Pancreas (tissue), 10 donors: ENCODE measurements at regions of chr11 and their contacts with region 1.

Region 1: DNA sequence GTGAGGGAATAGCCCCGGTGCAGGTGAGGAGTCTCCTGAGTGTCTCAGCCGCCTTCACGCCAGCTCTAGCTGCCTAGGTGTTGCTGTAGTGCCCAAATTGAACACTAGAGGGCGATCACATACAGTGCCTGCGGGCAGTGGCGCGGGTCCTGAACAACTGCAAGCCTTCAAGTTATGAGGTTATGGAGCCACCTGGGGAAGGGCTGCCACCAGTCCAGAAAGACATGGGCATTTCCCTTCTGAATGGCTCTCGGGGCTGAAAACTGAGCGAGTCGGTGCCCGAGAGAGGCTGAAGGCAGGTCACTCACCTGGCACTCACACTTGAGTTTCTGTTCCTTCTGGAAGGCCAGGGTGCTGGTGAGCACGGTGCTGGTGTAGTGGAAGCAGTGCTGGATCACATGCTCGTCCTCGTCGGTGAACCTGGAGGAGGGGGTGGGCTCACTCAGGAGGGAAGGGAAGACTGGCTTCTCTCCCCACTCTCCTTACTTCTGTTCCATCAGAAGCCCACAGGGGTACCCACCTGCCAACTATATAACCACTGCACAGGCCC is 88.4 kb downstream of the PDE2A start:
- DNase-seq: peak; percentile 45 to 78 (median 57)
- ATAC-seq: peak; percentile 68 to 87 (median 83)
- H3K4me3 ChIP-seq: no peak overlapping the region
- H3K27ac ChIP-seq: no peak overlapping the region
- H3K4me1 ChIP-seq: peaks cover 0 to 5% (median 0%) of the 10 kb centered on the region in 3 donors
- H3K27me3 ChIP-seq: no peaks in the 10 kb centered on the region
- CTCF ChIP-seq: peak; percentile 84 to 95 (median 94)

Region 2: GRCh38 chr11:72328366-72329224 is 257.2 kb before region 1 on chr11:
- intact Hi-C with region 1: no loop called
- DNase-seq: no peak
- ATAC-seq: no peak
- H3K4me3 ChIP-seq: no peak overlapping the region
- H3K27ac ChIP-seq: no peak overlapping the region
- H3K4me1 ChIP-seq: no peaks in the 10 kb centered on the region
- H3K27me3 ChIP-seq: no peaks in the 10 kb centered on the region
- CTCF ChIP-seq: no peak

Region 3: GRCh38 chr11:72635309-72635915 is 49.6 kb after region 1 on chr11:
- intact Hi-C with region 1: loop called in 1 of 3 experiments (anchors 5 kb)
- DNase-seq: no peak
- ATAC-seq: no peak
- H3K4me3 ChIP-seq: no peak overlapping the region
- H3K27ac ChIP-seq: no peak overlapping the region
- H3K4me1 ChIP-seq: no peaks in the 10 kb centered on the region
- H3K27me3 ChIP-seq: no peaks in the 10 kb centered on the region
- CTCF ChIP-seq: no peak

Region 4: DNA sequence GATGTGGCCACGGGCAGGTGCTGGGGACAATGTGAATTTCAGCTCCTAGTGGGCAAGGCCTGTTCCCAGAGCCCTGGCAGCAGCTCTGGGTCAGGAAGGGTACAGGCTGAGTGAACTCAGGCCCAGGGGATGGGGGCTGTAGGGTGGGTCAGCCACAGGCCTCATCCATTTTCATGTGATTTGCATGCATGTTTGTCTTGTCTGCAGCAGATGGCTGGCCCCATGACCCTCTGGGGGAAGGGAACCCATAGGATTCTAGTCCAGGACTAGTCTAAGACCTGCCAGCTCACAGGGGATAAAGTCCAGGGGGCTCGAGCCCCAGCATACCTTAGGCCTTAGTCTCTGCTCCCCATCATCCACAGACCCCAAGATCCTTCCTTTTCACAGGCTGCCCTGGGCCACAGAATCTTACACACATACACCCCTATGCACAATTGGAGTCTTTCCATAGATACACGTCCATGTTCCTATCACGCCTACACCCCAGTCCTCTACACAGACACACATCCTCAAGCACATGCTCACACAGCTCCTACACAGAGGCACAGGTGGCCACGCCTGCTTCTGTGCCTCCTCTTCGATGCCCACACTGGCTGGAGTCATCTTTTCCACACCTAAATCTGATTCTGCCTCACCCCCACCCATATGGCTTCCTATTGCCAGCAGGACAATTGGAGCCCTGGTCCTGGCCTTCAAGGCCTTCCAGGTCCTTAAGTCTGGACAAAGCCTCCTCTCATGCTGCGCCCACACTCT is 62.7 kb after region 1 on chr11:
- intact Hi-C with region 1: loop called in 1 of 3 experiments (anchors 5 kb)
- DNase-seq: no peak
- ATAC-seq: no peak
- H3K4me3 ChIP-seq: no peak overlapping the region
- H3K27ac ChIP-seq: no peak overlapping the region
- H3K4me1 ChIP-seq: no peaks in the 10 kb centered on the region
- H3K27me3 ChIP-seq: no peaks in the 10 kb centered on the region
- CTCF ChIP-seq: no peak